OCI-LY7 (cell line): ENCODE measurements at regions of chr1 and their contacts with region 1.

Region 1: DNA sequence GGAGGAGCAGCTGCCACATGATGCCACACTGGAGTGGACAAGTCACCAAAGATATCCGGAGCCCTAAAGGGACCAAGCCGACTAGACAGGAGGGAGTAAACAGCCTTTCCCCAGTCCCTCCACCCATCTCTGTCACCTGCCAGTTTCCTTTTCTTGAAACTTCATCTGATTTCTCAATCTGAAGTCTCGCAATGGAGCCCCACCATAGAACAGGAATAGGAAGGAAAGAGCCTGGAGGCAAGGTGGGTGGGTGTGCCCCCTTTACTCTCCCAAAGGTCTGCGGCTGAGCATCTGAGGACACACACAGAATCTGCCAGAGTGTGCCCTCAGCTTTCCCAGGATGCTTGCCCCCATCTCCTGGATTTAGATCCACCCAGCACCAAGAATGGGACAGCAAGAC is at the start of gene FCGR3B:
- DNase-seq: no peak
- H3K4me3 ChIP-seq: no peak within 1 kb of the TSS
- H3K27ac ChIP-seq: no peak within 1 kb of the TSS
- H3K4me1 ChIP-seq: no peaks in the 10 kb centered on the region
- CTCF ChIP-seq: no peak
- total RNA-seq, gene FCGR3B: not detected in 2 replicates

Region 2: GRCh38 chr1:161549652-161550051 is 81.4 kb before region 1 on chr1 and contains the start of gene FCGR3A:
- CTCF ChIA-PET with region 1: no interaction called
- POLR2A ChIA-PET with region 1: no interaction called
- intact Hi-C with region 1: loop called (anchors 10 kb)
- DNase-seq: no peak
- H3K4me3 ChIP-seq: no peak within 1 kb of the TSS
- H3K27ac ChIP-seq: no peak within 1 kb of the TSS
- H3K4me1 ChIP-seq: no peaks in the 10 kb centered on the region
- CTCF ChIP-seq: no peak
- total RNA-seq, gene FCGR3A: not detected in 2 replicates

Region 3: GRCh38 chr1:161678500-161678899 is 47.4 kb after region 1 on chr1:
- CTCF ChIA-PET with region 1: no interaction called
- POLR2A ChIA-PET with region 1: no interaction called
- intact Hi-C with region 1: no loop called
- DNase-seq: no peak
- H3K4me3 ChIP-seq: no peak overlapping the region
- H3K27ac ChIP-seq: no peak overlapping the region
- H3K4me1 ChIP-seq: no peaks in the 10 kb centered on the region
- CTCF ChIP-seq: no peak

Region 4: GRCh38 chr1:161718559-161719324 is 87.7 kb after region 1 on chr1:
- CTCF ChIA-PET with region 1: no interaction called
- POLR2A ChIA-PET with region 1: no interaction called
- intact Hi-C with region 1: no loop called
- DNase-seq: peak; percentile 82
- H3K4me3 ChIP-seq: peak overlapping the region; percentile 52
- H3K27ac ChIP-seq: peak overlapping the region; percentile 95
- H3K4me1 ChIP-seq: peaks cover 83% of the 10 kb centered on the region
- CTCF ChIP-seq: no peak

Region 5: DNA sequence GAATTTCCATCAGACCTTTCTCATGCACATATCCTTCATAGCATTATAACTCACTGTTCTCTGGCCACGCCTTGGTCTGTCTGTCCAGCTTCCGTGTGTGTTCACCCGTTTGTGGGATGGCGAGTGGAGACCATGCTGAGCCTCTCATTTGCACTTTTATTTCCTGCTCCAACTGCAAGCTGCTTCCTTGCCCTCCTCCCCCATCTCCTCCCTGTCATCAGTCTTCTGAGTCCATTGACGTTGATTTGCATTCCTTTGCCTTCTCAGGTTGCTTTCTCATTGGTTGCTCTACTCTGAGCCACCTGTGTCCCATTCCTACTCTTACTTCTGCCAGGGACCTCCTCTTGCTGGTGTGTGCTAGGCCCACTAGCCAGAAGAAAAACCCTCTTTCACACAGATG is 584.8 kb after region 1 on chr1:
- CTCF ChIA-PET with region 1: no interaction called
- POLR2A ChIA-PET with region 1: no interaction called
- intact Hi-C with region 1: no loop called
- DNase-seq: no peak
- H3K4me3 ChIP-seq: no peak overlapping the region
- H3K27ac ChIP-seq: no peak overlapping the region
- H3K4me1 ChIP-seq: no peaks in the 10 kb centered on the region
- CTCF ChIP-seq: no peak